ENCODE measurements at regions of chr1 and their contacts with region 1.

Region 1: DNA sequence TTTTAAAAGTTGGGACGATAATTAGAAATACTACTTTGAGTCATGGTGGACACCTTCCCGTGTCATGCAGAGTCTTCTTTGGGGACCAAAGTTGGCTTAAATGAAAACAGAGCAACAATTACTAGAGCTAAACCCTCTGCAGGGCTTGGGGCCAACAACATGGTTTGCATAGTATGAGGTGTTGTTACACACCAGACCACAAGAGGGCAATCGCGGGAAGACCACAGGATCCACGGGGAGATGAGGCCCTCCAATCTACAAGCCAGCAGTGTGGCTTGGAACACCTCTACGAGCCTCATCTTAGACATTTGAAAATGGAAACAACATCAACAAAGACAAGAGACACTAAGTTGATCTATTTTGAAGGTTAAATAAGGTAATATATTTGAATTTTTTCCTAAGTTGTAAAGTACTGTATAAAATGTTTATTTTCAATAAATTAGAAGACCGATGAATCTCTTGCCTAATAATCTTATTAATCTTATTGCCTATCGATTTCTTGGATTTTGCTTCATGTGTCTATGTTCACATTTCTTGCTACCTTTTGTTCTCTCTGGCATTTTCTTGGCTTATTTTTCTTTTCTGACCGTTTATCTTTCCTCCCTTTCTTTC is 8.2 kb upstream of the SMCP start:
- DNase-seq: peak; percentile 18 to 67 (median 36)
- ATAC-seq: peak; percentile 39
- H3K4me3 ChIP-seq: no peak overlapping the region
- H3K4me3 Mint-ChIP-seq: no peak overlapping the region
- H3K27ac ChIP-seq: no peak overlapping the region
- H3K27ac Mint-ChIP-seq: no peak overlapping the region
- H3K4me1 ChIP-seq: no peaks in the 10 kb centered on the region
- H3K4me1 Mint-ChIP-seq: no peaks in the 10 kb centered on the region
- H3K27me3 ChIP-seq: peaks cover 6 to 12% of the 10 kb centered on the region in 2 experiments
- H3K27me3 Mint-ChIP-seq: peaks cover 14% of the 10 kb centered on the region
- CTCF ChIP-seq: peak; percentile 81

Region 2: DNA sequence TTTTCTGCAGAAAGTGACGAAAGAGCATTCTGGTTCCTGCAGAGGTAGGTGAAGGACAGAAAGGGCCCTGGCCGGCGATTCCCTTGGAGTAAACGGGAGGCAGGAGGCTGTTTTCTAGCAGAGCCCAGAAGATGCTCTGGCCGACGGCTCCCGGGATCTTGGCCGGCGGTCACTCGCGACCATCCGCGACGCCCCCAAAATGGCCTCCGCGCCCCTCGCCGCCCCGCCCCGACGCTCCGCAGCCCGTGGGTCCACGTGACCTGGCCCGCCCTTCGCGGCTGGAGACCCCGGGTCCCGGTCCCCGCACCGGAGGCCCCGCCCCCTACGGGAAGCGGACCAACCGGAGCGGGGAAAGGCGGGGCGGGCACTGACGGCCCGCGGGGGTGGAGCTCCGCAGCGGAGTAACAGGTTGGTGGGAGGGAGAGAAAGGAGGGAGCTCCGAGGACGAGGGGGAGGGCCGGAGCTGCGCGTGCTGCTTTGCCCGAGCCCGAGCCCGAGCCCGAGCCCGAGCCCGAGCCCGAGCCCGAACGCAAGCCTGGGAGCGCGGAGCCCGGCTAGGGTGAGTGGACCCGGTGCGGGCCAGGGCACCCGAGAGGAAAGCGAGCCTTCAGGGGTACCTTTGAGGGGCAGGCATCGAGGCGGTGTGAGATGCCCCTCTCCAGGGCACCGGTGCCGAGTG is 1358.8 kb before region 1 on chr1 and contains the start of gene CGN:
- CTCF ChIA-PET with region 1: no interaction called
- POLR2A ChIA-PET with region 1: no interaction called
- intact Hi-C with region 1: no loop called
- DNase-seq: peak; percentile 70 to 95 (median 84)
- ATAC-seq: peak; percentile 97
- H3K4me3 ChIP-seq: peak within 1 kb of the TSS; percentile 76
- H3K4me3 Mint-ChIP-seq: peak within 1 kb of the TSS; percentile 97
- H3K27ac ChIP-seq: peak within 1 kb of the TSS in 1 of 2 donors; percentile 6
- H3K27ac Mint-ChIP-seq: peak within 1 kb of the TSS; percentile 75
- H3K4me1 ChIP-seq: peaks cover 30% of the 10 kb centered on the region
- H3K4me1 Mint-ChIP-seq: peaks cover 32% of the 10 kb centered on the region
- H3K27me3 ChIP-seq: no peaks in the 10 kb centered on the region
- H3K27me3 Mint-ChIP-seq: no peaks in the 10 kb centered on the region
- CTCF ChIP-seq: no peak
- total RNA-seq, gene CGN: 0.08 to 0.28 TPM

Region 3: DNA sequence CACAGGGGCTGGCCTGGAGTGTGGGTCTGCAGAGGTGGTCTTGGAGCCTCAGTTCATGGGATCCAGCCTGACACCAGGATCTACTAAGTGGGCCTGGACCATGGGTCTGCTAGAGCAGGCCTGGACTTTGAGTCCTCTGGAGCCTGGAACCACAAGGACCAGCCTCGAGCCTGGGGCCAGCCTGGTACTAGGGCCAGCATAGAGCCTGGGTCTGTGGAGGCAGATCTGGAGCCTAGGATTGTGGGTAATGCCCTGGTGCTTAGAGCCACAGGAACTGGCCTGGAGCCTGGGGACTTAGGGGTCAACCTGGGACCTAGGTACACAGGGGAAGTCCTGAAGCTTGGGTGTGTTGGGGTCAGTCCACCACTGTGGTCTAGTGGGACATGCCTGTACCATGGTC is 402.3 kb after region 1 on chr1:
- CTCF ChIA-PET with region 1: no interaction called
- POLR2A ChIA-PET with region 1: no interaction called
- intact Hi-C with region 1: loop called in 1 of 2 experiments (anchors 2 kb)
- DNase-seq: no peak
- ATAC-seq: no peak
- H3K4me3 ChIP-seq: no peak overlapping the region
- H3K4me3 Mint-ChIP-seq: no peak overlapping the region
- H3K27ac ChIP-seq: no peak overlapping the region
- H3K27ac Mint-ChIP-seq: no peak overlapping the region
- H3K4me1 ChIP-seq: no peaks in the 10 kb centered on the region
- H3K4me1 Mint-ChIP-seq: no peaks in the 10 kb centered on the region
- H3K27me3 ChIP-seq: peaks cover 4 to 19% of the 10 kb centered on the region in 2 experiments
- H3K27me3 Mint-ChIP-seq: peaks cover 69% of the 10 kb centered on the region
- CTCF ChIP-seq: no peak

Region 4: GRCh38 chr1:153277817-153278216 is 407.9 kb after region 1 on chr1:
- CTCF ChIA-PET with region 1: no interaction called
- POLR2A ChIA-PET with region 1: no interaction called
- intact Hi-C with region 1: loop called in 1 of 2 experiments (anchors 2 kb)
- DNase-seq: peak in 10 of 14 experiments; percentile 12 to 64 (median 30)
- ATAC-seq: peak; percentile 72
- H3K4me3 ChIP-seq: no peak overlapping the region
- H3K4me3 Mint-ChIP-seq: no peak overlapping the region
- H3K27ac ChIP-seq: no peak overlapping the region
- H3K27ac Mint-ChIP-seq: no peak overlapping the region
- H3K4me1 ChIP-seq: no peaks in the 10 kb centered on the region
- H3K4me1 Mint-ChIP-seq: no peaks in the 10 kb centered on the region
- H3K27me3 ChIP-seq: peaks cover 4 to 15% of the 10 kb centered on the region in 2 experiments
- H3K27me3 Mint-ChIP-seq: peaks cover 61% of the 10 kb centered on the region
- CTCF ChIP-seq: peak; percentile 67